ENCODE measurements at regions of chr11 and their contacts with region 1.

Region 1: GRCh38 chr11:116373104-116373944 is 399.5 kb downstream of the BUD13 start:
- DNase-seq: no peak
- H3K4me3 ChIP-seq: no peak overlapping the region
- H3K27ac ChIP-seq: peak overlapping the region in 1 of 2 experiments; percentile 97; a peak in 2 of 4 replicates
- H3K4me1 ChIP-seq: peaks cover 0 to 47% of the 10 kb centered on the region in 2 experiments; a peak in 2 of 4 replicates
- H3K27me3 ChIP-seq: no peaks in the 10 kb centered on the region
- CTCF ChIP-seq: no peak
- EP300 ChIP-seq: no peak
- RAD21 ChIP-seq: no peak

Region 2: GRCh38 chr11:116312570-116313391 is 60.5 kb before region 1 on chr11:
- CTCF ChIA-PET with region 1: interaction called, 3 read pairs
- POLR2A ChIA-PET with region 1: interaction called, 12 read pairs
- DNase-seq: peak; percentile 88
- H3K4me3 ChIP-seq: peak overlapping the region in 1 of 2 experiments; percentile 38; a peak in 3 of 4 replicates
- H3K27ac ChIP-seq: peak overlapping the region; percentile 65 to 100
- H3K4me1 ChIP-seq: peaks cover 27 to 42% of the 10 kb centered on the region in 2 experiments
- H3K27me3 ChIP-seq: no peaks in the 10 kb centered on the region
- CTCF ChIP-seq: no peak
- EP300 ChIP-seq: peak; percentile 65 to 73; a peak in 3 of 4 replicates
- RAD21 ChIP-seq: no peak; the same call in none of the 2 replicates

Measured in SK-N-SH (cell line).